PC-9 (cell line): ENCODE measurements at regions of chr5 and their contacts with region 1.

Region 1: DNA sequence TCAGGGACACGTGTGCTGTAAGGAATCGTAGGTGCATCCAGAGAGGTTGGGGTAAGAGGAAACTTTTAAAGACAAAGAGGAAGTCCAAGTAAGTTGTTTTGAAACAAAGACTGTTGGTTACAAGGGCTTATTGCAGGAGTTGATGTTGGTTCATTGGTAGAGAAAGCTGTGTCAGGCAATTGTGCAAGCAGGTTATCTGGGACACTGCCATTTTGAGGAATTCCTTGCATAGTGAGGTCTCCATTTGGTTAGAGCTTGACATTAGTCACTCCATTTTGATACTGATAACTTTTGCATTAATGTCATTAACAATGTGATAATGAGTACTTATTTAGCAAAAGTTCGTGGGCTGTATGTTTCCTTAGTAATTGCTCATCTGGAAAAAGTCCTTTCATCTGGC is 24.9 kb downstream of the CNOT6 start:
- DNase-seq: no peak
- H3K4me3 ChIP-seq: no peak overlapping the region
- H3K27ac ChIP-seq: no peak overlapping the region
- H3K4me1 ChIP-seq: no peaks in the 10 kb centered on the region
- H3K27me3 ChIP-seq: no peaks in the 10 kb centered on the region
- CTCF ChIP-seq: no peak

Region 2: GRCh38 chr5:181121659-181122561 is 602.8 kb after region 1 on chr5:
- CTCF ChIA-PET with region 1: interaction called, 10 read pairs
- POLR2A ChIA-PET with region 1: no interaction called
- intact Hi-C with region 1: no loop called
- DNase-seq: no peak
- H3K4me3 ChIP-seq: no peak overlapping the region
- H3K27ac ChIP-seq: no peak overlapping the region
- H3K4me1 ChIP-seq: peaks cover 22% of the 10 kb centered on the region
- H3K27me3 ChIP-seq: no peaks in the 10 kb centered on the region
- CTCF ChIP-seq: no peak